Heart left ventricle (tissue), 16 donors: ENCODE measurements at regions of chr9 and their contacts with region 1.

Region 1: GRCh38 chr9:99445371-99445891 is 223.3 kb downstream of the SEC61B start:
- DNase-seq: peak; percentile 69 to 91 (median 79)
- ATAC-seq: peak; percentile 97 to 99 (median 98)
- H3K4me3 ChIP-seq: peak overlapping the region in 1 of 12 donors; percentile 2
- H3K27ac ChIP-seq: peak overlapping the region in 11 of 12 donors; percentile 25 to 82 (median 67)
- H3K4me1 ChIP-seq: peaks cover 0 to 21% (median 10%) of the 10 kb centered on the region in 12 donors
- H3K27me3 ChIP-seq: no peaks in the 10 kb centered on the region
- CTCF ChIP-seq: no peak
- POLR2A ChIP-seq: no peak

Region 2: GRCh38 chr9:99359336-99359735 is 86.1 kb before region 1 on chr9:
- intact Hi-C with region 1: loop called in 4 of 10 experiments (anchors 2 to 10 kb)
- DNase-seq: no peak
- ATAC-seq: peak in 2 of 4 donors; percentile 12 to 23
- H3K4me3 ChIP-seq: no peak overlapping the region
- H3K27ac ChIP-seq: peak overlapping the region in 11 of 12 donors; percentile 7 to 89 (median 75)
- H3K4me1 ChIP-seq: peaks cover 0 to 40% (median 7%) of the 10 kb centered on the region in 12 donors
- H3K27me3 ChIP-seq: peaks cover 0 to 19% (median 0%) of the 10 kb centered on the region in 9 donors
- CTCF ChIP-seq: no peak
- POLR2A ChIP-seq: no peak

Region 3: GRCh38 chr9:99368341-99369323 is 76.8 kb before region 1 on chr9:
- intact Hi-C with region 1: loop called in 1 of 10 experiments (anchors 10 kb)
- DNase-seq: peak in 4 of 5 donors; percentile 79 to 87 (median 82)
- ATAC-seq: peak; percentile 94 to 98 (median 97)
- H3K4me3 ChIP-seq: peak overlapping the region; percentile 9 to 63 (median 48)
- H3K27ac ChIP-seq: peak overlapping the region; percentile 12 to 93 (median 83)
- H3K4me1 ChIP-seq: peaks cover 0 to 25% (median 10%) of the 10 kb centered on the region in 12 donors
- H3K27me3 ChIP-seq: no peaks in the 10 kb centered on the region
- CTCF ChIP-seq: no peak
- POLR2A ChIP-seq: no peak

Region 4: DNA sequence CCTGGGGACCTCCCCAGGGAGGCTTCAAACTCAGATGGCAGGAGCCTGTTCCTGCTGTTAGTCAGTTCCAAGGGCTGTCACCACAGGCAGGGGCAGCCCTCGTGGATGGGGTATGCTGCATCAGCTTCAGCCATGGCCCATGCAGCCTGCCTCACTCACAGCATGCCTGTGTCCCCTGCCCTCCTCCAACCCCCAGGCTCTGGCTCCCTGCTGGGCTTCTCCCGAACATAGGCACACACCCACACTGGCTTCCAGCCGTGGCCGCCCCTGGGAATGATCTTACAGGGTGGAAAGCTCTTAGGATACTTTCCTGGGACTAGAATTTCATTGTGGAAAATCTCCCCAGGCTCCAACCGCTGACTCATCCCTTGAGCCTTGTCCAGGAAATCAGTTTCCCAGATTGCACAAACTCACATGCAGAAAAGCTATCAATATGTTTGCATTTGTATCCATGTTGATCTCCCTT is 59.6 kb before region 1 on chr9:
- intact Hi-C with region 1: no loop called
- DNase-seq: peak; percentile 31 to 76 (median 48)
- ATAC-seq: peak in 3 of 4 donors; percentile 43 to 55 (median 44)
- H3K4me3 ChIP-seq: no peak overlapping the region
- H3K27ac ChIP-seq: peak overlapping the region in 3 of 12 donors; percentile 24 to 53 (median 32)
- H3K4me1 ChIP-seq: peaks cover 0 to 5% (median 0%) of the 10 kb centered on the region in 12 donors
- H3K27me3 ChIP-seq: no peaks in the 10 kb centered on the region
- CTCF ChIP-seq: no peak
- POLR2A ChIP-seq: no peak

Region 5: GRCh38 chr9:99474186-99474585 is 28.8 kb after region 1 on chr9:
- intact Hi-C with region 1: loop called in 1 of 10 experiments (anchors 2 kb)
- DNase-seq: peak in 3 of 5 donors; percentile 36 to 47 (median 38)
- ATAC-seq: peak in 2 of 4 donors; percentile 45 to 57
- H3K4me3 ChIP-seq: no peak overlapping the region
- H3K27ac ChIP-seq: no peak overlapping the region
- H3K4me1 ChIP-seq: peaks cover 0 to 19% (median 3%) of the 10 kb centered on the region in 12 donors
- H3K27me3 ChIP-seq: no peaks in the 10 kb centered on the region
- CTCF ChIP-seq: no peak
- POLR2A ChIP-seq: no peak